Transverse colon (tissue), 4 donors: ENCODE measurements at regions of chr1 and their contacts with region 1.

Region 1: DNA sequence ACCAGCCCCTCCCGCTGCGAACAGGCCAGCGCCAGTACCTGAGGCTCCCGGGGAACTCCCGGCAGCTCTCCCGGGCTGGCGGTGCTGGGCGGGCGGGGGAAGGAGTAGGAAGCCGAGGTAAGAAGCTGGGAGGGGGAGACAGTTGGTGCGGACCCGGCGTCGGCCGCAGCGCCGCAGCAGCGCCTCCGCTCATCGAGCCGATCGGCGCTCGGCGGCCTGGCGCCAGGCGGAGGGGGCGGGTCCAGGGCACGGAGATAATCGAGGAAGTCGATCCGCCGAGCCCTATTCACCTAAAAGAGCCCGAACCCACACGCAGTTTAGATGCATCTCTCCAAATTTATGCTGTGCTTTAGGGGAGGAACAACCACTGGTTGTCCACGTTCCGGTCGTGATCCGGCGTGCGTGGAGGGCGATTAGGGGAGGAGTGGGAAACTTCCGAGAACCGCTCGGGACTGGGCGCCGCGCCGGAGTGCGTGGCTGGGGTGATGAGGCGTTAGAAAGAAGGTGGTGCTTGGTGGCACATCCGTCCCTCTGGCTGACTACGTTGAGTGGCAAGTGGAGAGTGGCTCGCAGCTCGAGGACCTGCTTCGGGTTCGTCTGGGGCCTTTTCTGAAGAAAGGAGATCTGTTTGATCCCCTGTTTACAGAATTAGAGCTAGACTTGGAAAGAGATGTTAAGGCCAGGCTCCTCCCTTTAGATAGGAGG is at the start of gene VAMP4:
- DNase-seq: peak; percentile 91
- H3K4me3 ChIP-seq: peak within 1 kb of the TSS; percentile 80 to 99 (median 84)
- H3K27ac ChIP-seq: peak within 1 kb of the TSS; percentile 90 to 99 (median 96)
- H3K4me1 ChIP-seq: peaks cover 10 to 34% (median 15%) of the 10 kb centered on the region in 4 donors
- H3K27me3 ChIP-seq: no peaks in the 10 kb centered on the region
- CTCF ChIP-seq: peak in 1 of 5 experiments; percentile 6
- EP300 ChIP-seq: no peak
- POLR2A ChIP-seq: peak; percentile 90
- total RNA-seq, gene VAMP4: 6.0 to 14.3 (median 9.4) TPM

Region 2: GRCh38 chr1:171781176-171781875 is 39.3 kb after region 1 on chr1 and contains the start of gene METTL13:
- in situ Hi-C with region 1: no loop called
- intact Hi-C with region 1: loop called (anchors 2 kb)
- DNase-seq: peak; percentile 99
- H3K4me3 ChIP-seq: peak within 1 kb of the TSS; percentile 64 to 78 (median 64)
- H3K27ac ChIP-seq: peak within 1 kb of the TSS; percentile 89 to 98 (median 91)
- H3K4me1 ChIP-seq: peaks cover 9 to 40% (median 22%) of the 10 kb centered on the region in 4 donors
- H3K27me3 ChIP-seq: no peaks in the 10 kb centered on the region
- CTCF ChIP-seq: no peak
- EP300 ChIP-seq: no peak
- POLR2A ChIP-seq: peak; percentile 95
- total RNA-seq, gene METTL13: 10.5 to 80.8 (median 25.8) TPM